ENCODE measurements at regions of chr11 and their contacts with region 1.

Region 1: GRCh38 chr11:61392981-61393595 is 701 bp downstream of the TMEM216 start:
- DNase-seq: peak in 1 of 2 experiments; percentile 10
- H3K4me3 ChIP-seq: peak overlapping the region; percentile 81
- H3K27ac ChIP-seq: peak overlapping the region; percentile 52
- H3K4me1 ChIP-seq: peaks cover 11% of the 10 kb centered on the region
- H3K27me3 ChIP-seq: no peaks in the 10 kb centered on the region
- CTCF ChIP-seq: no peak; the same call in 1 of the 2 replicates

Region 2: GRCh38 chr11:61327669-61328071 is 65.4 kb before region 1 on chr11:
- CTCF ChIA-PET with region 1: no interaction called
- POLR2A ChIA-PET with region 1: interaction called, 15 read pairs
- intact Hi-C with region 1: loop called (anchors 2 kb)
- DNase-seq: no peak
- H3K4me3 ChIP-seq: no peak overlapping the region
- H3K27ac ChIP-seq: no peak overlapping the region
- H3K4me1 ChIP-seq: peaks cover 18% of the 10 kb centered on the region
- H3K27me3 ChIP-seq: no peaks in the 10 kb centered on the region
- CTCF ChIP-seq: no peak

Measured in PC-9 (cell line).